ENCODE measurements at regions of chr2 and their contacts with region 1.

Region 1: GRCh38 chr2:39150874-39151497 is 30.1 kb upstream of the SOS1 start:
- DNase-seq: no peak
- H3K4me3 ChIP-seq: no peak overlapping the region
- H3K27me3 ChIP-seq: peaks cover 1% of the 10 kb centered on the region
- CTCF ChIP-seq: no peak

Region 2: DNA sequence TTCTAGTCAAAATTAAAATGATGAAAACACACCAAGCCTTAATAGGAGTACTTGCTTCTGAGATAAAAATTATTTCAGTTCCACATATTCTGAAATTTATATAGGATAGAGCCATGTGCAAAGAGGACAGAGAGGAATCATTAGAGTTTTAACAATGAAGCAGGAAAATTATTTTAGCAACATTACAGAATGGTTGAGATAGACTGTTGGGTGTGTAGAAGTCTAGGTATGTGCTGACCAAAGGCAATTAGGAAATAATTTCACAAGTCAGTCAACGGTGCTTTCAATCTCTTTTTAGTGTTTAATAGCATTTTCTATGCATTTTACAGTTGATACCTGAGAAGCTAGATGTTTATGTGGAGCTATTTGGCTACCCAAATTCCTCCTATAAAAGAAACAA is 55.4 kb before region 1 on chr2:
- CTCF ChIA-PET with region 1: no interaction called
- POLR2A ChIA-PET with region 1: interaction called, 11 read pairs
- DNase-seq: no peak
- H3K4me3 ChIP-seq: no peak overlapping the region
- H3K27me3 ChIP-seq: no peaks in the 10 kb centered on the region
- CTCF ChIP-seq: no peak

Region 3: GRCh38 chr2:39135690-39136259 is 15.2 kb before region 1 on chr2:
- CTCF ChIA-PET with region 1: no interaction called
- POLR2A ChIA-PET with region 1: no interaction called
- DNase-seq: no peak
- H3K4me3 ChIP-seq: no peak overlapping the region
- H3K27me3 ChIP-seq: no peaks in the 10 kb centered on the region
- CTCF ChIP-seq: no peak

Region 4: DNA sequence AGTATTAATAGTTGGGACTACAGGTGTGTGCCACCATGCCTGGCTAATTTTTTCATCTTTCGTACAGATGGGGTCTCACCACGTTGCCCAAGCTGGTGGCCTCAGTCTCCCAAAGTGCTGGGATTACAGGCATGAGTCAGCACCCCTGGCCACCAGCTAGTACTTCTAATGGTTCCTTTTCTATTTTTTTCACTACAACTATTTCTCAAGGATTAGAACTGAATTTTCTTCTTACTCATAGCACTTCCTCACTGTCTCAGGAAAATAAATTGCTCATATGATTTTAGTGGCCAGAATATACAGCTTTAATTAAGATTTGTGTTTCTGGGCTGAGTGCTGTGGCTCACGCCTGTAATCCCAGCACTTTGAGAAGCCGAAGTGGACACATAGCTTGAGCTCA is 13.1 kb after region 1 on chr2:
- CTCF ChIA-PET with region 1: no interaction called
- POLR2A ChIA-PET with region 1: no interaction called
- DNase-seq: no peak
- H3K4me3 ChIP-seq: no peak overlapping the region
- H3K27me3 ChIP-seq: no peaks in the 10 kb centered on the region
- CTCF ChIP-seq: no peak

Region 5: GRCh38 chr2:40751981-40752380 is 1601.0 kb after region 1 on chr2:
- CTCF ChIA-PET with region 1: no interaction called
- POLR2A ChIA-PET with region 1: no interaction called
- DNase-seq: no peak
- H3K4me3 ChIP-seq: no peak overlapping the region
- H3K27me3 ChIP-seq: no peaks in the 10 kb centered on the region
- CTCF ChIP-seq: no peak

Measured in BJ (cell line).